ENCODE measurements at regions of chr11 and their contacts with region 1.

Region 1: GRCh38 chr11:108766596-108767173 is 101.8 kb downstream of the DDX10 start:
- DNase-seq: no peak
- ATAC-seq: no peak
- H3K4me3 ChIP-seq: no peak overlapping the region
- H3K27ac ChIP-seq: no peak overlapping the region
- H3K4me1 ChIP-seq: no peaks in the 10 kb centered on the region
- H3K27me3 ChIP-seq: no peaks in the 10 kb centered on the region
- CTCF ChIP-seq: no peak
- EP300 ChIP-seq: no peak
- POLR2A ChIP-seq: no peak
- RAD21 ChIP-seq: no peak

Region 2: GRCh38 chr11:108713076-108713790 is 53.5 kb before region 1 on chr11:
- CTCF ChIA-PET with region 1: no interaction called
- POLR2A ChIA-PET with region 1: no interaction called
- in situ Hi-C with region 1: no loop called
- intact Hi-C with region 1: no loop called
- DNase-seq: no peak
- ATAC-seq: no peak
- H3K4me3 ChIP-seq: no peak overlapping the region
- H3K27ac ChIP-seq: no peak overlapping the region
- H3K4me1 ChIP-seq: peaks cover 20% of the 10 kb centered on the region
- H3K27me3 ChIP-seq: no peaks in the 10 kb centered on the region
- CTCF ChIP-seq: no peak
- EP300 ChIP-seq: no peak
- POLR2A ChIP-seq: no peak
- RAD21 ChIP-seq: no peak

Region 3: DNA sequence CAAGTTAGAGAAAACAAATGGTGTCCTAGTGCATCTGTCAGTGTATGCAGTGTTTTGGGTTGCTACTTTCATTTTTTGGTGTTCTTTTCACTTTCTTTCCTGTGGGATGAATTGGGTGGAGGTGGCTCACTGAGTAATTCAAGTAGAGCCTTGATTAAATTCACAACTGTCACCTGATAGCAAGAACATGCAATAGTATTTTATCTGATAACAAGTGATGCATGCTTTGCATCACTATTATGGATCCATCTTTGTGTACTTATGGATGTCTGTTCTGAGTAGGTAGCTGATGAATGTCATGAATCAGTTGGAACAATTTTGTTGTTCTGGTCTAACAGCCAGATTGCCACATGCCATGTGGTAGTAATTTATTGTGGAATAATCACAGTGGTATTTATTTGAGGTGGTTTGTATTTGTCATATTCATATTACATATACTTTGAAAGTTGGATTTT is 14.4 kb before region 1 on chr11:
- CTCF ChIA-PET with region 1: no interaction called
- POLR2A ChIA-PET with region 1: no interaction called
- in situ Hi-C with region 1: no loop called
- intact Hi-C with region 1: loop called (anchors 1 kb)
- DNase-seq: no peak
- ATAC-seq: no peak
- H3K4me3 ChIP-seq: no peak overlapping the region
- H3K27ac ChIP-seq: no peak overlapping the region
- H3K4me1 ChIP-seq: peaks cover 15% of the 10 kb centered on the region
- H3K27me3 ChIP-seq: no peaks in the 10 kb centered on the region
- CTCF ChIP-seq: no peak
- EP300 ChIP-seq: no peak
- POLR2A ChIP-seq: no peak
- RAD21 ChIP-seq: no peak

Region 4: DNA sequence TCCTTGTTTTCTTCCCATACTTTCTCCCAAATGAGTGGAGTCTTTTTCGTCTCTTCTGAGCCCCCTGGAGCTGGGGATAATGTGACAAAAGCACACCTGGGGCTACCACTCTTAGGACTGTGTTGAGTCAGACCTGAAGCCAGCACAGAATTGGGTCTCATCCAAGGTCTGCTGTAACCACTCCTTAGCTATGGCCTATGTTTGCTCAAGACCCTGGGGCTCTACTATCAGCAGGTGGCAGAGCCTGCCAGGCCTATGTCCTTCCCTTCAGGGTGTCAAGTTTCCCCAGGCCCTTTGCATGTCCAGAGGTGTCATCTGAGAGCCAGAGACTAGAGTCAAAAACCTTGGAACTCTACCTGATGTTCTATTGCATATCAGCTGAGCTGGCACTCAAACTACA is 233.8 kb after region 1 on chr11:
- CTCF ChIA-PET with region 1: no interaction called
- POLR2A ChIA-PET with region 1: no interaction called
- in situ Hi-C with region 1: no loop called
- intact Hi-C with region 1: no loop called
- DNase-seq: no peak
- ATAC-seq: no peak
- H3K4me3 ChIP-seq: no peak overlapping the region
- H3K27ac ChIP-seq: no peak overlapping the region
- H3K4me1 ChIP-seq: no peaks in the 10 kb centered on the region
- H3K27me3 ChIP-seq: no peaks in the 10 kb centered on the region
- CTCF ChIP-seq: no peak
- EP300 ChIP-seq: no peak
- POLR2A ChIP-seq: no peak
- RAD21 ChIP-seq: no peak

Region 5: DNA sequence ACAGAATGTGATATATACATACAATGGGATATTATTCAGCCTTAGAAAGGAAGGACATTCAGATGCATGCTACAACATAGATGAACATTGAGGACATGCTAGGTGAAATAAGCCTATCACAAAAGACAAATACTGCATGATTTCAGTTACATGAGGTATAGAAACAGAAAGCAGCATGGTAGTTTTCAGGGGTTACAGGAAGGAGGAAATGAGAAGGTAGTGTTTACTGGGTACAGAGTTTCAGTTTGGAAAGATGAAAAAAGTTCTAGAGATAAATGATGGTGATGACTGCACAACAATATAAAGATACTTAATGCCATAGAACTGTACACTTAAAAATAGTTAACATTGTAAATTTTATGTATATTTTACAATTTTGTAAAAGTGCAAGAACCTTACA is 388.6 kb after region 1 on chr11:
- CTCF ChIA-PET with region 1: no interaction called
- POLR2A ChIA-PET with region 1: no interaction called
- in situ Hi-C with region 1: no loop called
- intact Hi-C with region 1: no loop called
- DNase-seq: no peak
- ATAC-seq: no peak
- H3K4me3 ChIP-seq: no peak overlapping the region
- H3K27ac ChIP-seq: no peak overlapping the region
- H3K4me1 ChIP-seq: no peaks in the 10 kb centered on the region
- H3K27me3 ChIP-seq: no peaks in the 10 kb centered on the region
- CTCF ChIP-seq: no peak
- EP300 ChIP-seq: no peak
- POLR2A ChIP-seq: no peak
- RAD21 ChIP-seq: no peak

Measured in HepG2 (cell line).